Naive thymus-derived CD8-positive, alpha-beta T cell (primary cell): ENCODE measurements at regions of chr1 and their contacts with region 1.

Region 1: DNA sequence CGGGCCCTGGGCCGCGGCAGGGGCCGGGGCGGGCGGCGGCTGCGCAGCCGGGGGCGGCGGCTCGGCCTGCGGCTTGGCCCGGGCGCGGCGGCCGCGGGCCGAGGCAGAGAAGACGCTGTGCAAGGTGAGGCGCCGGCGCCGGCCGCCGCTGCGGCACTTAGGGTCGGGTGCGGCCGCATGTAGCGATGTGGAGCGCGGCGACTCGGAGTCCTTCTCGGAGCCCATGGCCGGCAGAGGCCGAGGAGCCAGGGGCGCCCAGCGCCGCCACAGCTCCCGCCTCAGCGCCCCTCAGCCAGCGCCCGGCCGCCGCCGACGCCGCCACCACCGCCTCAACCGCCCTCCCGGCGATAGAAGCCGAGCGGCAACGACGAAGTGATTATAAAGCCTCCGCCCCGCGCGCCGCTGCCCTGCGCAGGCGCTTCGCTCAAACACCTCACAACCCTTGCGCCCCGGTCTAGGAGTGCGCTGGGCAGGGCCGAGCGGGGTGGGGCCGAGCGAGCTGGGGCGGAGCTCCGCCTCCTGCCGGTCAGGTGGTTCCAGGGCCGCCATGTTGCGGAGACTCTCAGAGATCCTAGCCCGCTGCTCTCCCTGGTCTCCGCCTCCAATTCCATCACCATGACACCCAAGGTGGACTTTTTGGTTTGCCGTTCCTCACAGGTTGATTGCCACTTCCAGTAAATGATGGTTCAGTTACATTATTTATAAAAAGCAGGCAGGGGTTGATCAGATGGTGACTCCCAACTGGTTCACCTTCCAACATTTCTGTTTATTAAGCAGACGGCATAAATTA is at the start of gene RNF19B:
- DNase-seq: peak; percentile 81 to 96 (median 91)
- ATAC-seq: peak; percentile 90 to 92
- H3K4me3 Mint-ChIP-seq: peak within 1 kb of the TSS; percentile 84 to 93 (median 91)
- H3K27ac Mint-ChIP-seq: peak within 1 kb of the TSS; percentile 76 to 96 (median 94)
- H3K4me1 Mint-ChIP-seq: peaks cover 16 to 38% (median 32%) of the 10 kb centered on the region in 4 donors
- H3K27me3 Mint-ChIP-seq: peaks cover 0 to 3% (median 0%) of the 10 kb centered on the region in 5 donors
- polyA plus RNA-seq, gene RNF19B: 0.44 to 1.8 (median 1.6) TPM

Region 2: GRCh38 chr1:32981003-32981901 is 16.6 kb after region 1 on chr1:
- POLR2A ChIA-PET with region 1: interaction called, 60 read pairs
- DNase-seq: peak in 9 of 10 donors; percentile 27 to 71 (median 53)
- ATAC-seq: peak; percentile 100
- H3K4me3 Mint-ChIP-seq: peak overlapping the region; percentile 67 to 87 (median 80)
- H3K27ac Mint-ChIP-seq: peak overlapping the region; percentile 90 to 99 (median 96)
- H3K4me1 Mint-ChIP-seq: peaks cover 5 to 51% (median 21%) of the 10 kb centered on the region in 4 donors
- H3K27me3 Mint-ChIP-seq: no peaks in the 10 kb centered on the region